HAP-1 (cell line): ENCODE measurements at regions of chr13 and their contacts with region 1.

Region 1: DNA sequence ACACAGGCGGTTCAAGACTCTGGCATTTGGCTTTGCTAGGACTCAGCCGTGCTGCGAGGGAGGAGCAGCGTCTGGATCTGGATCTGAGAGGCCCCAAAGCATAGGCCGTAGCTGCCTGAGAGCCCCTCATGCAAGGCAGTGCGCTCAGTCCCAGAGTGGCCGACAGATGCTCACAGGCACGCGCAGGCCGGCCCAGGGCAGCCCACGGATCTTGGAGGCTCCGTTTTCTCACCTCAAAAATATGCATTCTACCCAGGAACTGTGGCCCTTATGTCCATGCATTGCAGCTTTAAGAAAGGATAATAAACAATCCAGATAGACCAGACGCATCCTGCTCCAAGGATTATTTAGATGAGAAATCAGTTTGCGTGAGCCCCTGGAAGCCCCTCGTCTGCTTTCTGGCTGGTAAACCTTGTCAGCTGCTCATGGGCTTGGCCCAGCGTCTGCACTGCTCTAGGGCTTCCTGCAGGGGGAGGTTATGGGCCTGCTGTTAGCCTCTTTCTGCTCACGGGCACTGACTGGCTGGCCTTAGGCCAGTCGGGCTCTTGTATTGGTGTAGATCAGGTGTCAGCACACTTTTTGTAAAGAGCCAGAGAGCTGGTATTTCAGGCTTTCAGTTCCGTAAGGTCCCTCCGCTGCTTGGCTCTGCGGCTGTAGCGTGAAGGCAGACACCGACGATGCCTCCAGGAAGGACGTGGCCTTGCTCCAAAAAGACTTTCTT is 24.2 kb downstream of the TEX29 start:
- DNase-seq: peak; percentile 17 to 59
- H3K4me3 ChIP-seq: no peak overlapping the region
- H3K4me1 ChIP-seq: no peaks in the 10 kb centered on the region
- H3K27me3 ChIP-seq: 0 out of 2 replicates have a peak, but pooled peaks cover 2% of the 10 kb centered on the region

Region 2: DNA sequence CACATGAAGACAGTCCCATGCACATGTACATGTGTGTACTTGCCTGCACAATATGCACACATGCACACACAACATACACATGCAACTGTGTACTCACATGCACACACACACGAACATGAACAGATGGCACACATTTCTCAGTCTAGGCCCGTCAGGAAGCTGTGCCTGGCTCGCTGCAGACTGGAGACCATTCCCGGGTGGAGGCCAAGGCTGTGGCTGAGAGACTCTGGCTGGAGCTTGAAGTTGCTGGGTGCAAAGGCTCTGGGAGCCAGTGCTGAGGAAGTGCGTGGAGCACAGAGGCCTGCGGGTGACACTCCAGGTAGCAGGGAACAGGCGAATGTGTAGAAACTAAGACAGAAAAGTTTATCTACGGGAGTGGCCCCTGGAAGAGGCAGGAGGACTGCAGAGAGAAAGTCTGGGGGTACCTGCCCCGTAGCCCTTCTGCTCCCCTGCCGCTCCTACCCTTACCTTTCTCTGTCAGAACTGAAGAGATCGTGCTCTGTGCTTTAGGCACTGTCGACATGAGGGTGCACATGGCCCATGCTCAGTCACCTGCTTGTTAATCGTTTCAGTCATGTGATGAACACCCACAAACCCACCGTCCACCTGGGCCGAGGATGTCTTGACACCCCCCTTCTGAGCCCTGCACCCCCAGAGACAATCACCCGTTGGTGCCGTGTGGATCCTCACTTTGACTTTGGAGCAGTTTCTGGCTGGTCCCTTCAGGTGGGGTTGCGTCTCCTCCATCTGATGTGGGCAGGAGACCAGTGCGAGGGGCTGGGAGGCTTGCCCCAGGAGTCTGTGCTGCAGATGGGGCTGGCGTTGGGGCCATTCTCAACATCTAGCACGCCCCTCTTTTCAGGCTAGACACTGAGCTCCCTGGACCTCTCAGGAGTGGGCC is 45.2 kb after region 1 on chr13:
- in situ Hi-C with region 1: loop called (anchors 5 kb)
- DNase-seq: no peak
- H3K4me3 ChIP-seq: no peak overlapping the region
- H3K4me1 ChIP-seq: peaks cover 6% of the 10 kb centered on the region
- H3K27me3 ChIP-seq: peaks cover 20% of the 10 kb centered on the region

Region 3: DNA sequence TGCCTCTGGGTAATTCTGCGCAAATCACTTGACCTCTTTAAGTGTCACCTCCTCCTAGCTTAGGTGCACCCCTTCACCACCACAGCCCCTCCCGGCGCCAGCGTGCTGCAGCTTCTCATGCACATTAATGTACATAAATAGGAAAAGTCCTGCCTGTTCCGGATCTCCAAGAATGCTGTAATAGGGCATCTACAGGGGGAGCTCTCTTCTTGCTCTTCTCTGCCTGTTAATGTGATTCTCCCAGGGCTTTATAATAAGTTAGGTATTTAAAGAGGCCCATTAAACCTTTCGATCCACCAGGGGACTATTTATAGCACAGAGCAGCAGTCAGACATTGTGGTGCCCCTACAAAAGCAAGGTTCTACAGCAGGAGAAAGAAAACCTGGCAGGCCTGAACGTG is 757.6 kb after region 1 on chr13:
- in situ Hi-C with region 1: no loop called
- DNase-seq: peak in 1 of 2 experiments; percentile 2
- H3K4me3 ChIP-seq: no peak overlapping the region
- H3K4me1 ChIP-seq: no peaks in the 10 kb centered on the region
- H3K27me3 ChIP-seq: no peaks in the 10 kb centered on the region